Colonic mucosa (tissue), 4 donors: ENCODE measurements at regions of chrX and their contacts with region 1.

Region 1: GRCh38 chrX:51641421-51642021 is 22.8 kb upstream of the CENPVL3 start:
- DNase-seq: no peak
- H3K4me3 ChIP-seq: no peak overlapping the region
- H3K27ac ChIP-seq: no peak overlapping the region
- H3K4me1 ChIP-seq: no peaks in the 10 kb centered on the region
- H3K27me3 ChIP-seq: no peaks in the 10 kb centered on the region
- CTCF ChIP-seq: no peak

Region 2: DNA sequence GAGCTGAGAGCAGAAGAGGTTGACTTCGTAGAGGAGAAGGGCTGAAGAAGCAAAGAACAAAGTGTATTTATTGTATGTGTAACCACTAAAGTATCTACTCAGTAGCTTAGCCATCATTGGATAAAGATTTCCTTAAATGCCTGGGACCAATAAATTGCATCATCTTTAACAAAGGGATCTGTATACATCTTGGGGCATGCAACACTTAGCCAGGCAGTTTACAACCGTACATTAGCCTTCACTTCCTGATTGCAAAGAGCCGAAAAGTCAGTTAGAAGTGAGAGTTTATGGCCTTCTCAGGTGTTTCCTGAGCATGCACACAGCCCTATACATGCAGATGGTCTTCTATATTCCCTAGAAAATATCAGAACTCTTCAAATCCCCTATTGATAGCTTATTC is 183.9 kb after region 1 on chrX:
- intact Hi-C with region 1: no loop called
- DNase-seq: peak; percentile 19
- H3K4me3 ChIP-seq: no peak overlapping the region
- H3K27ac ChIP-seq: no peak overlapping the region
- H3K4me1 ChIP-seq: no peaks in the 10 kb centered on the region
- H3K27me3 ChIP-seq: no peaks in the 10 kb centered on the region
- CTCF ChIP-seq: no peak

Region 3: DNA sequence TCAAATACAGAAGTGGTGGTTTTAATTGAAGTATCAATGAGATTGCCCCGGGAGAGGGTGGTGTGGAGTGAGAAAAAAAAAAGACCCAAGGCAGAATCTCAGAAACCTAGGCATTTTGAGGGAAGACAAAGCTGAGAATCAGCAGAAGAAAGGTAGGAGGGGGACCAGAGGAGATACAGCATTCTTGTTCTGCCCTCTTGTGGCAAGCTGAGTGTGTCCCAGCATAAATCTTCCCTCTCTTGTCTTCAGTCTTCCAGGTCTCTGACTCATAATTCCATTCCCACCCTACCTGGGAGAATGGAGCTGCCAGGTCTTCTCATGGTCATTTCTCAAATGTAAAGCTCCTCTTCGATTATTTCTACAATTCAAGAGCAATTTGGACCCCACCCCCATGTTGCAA is 219.2 kb after region 1 on chrX:
- intact Hi-C with region 1: loop called (anchors 5 kb)
- DNase-seq: peak; percentile 22
- H3K4me3 ChIP-seq: no peak overlapping the region
- H3K27ac ChIP-seq: no peak overlapping the region
- H3K4me1 ChIP-seq: no peaks in the 10 kb centered on the region
- H3K27me3 ChIP-seq: no peaks in the 10 kb centered on the region
- CTCF ChIP-seq: no peak

Region 4: DNA sequence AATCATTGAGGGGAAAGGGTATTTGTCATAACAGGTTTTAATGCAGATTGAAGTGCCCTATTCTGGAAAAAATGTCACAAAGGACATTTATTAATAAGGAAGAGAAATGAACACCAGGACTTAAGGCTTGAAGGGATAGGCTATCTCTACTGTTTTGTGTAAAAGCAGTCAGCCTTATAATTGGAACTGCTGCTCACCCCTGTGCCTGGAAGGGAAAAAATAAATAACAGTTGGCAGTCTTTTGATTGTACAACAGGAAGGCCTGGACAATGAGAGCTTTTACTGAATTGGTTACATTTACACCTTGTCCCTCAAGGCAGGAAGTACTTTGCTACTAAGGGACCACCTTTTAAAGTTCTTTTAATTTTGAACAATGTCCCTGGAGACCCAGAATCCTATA is 525.3 kb after region 1 on chrX:
- intact Hi-C with region 1: no loop called
- DNase-seq: no peak
- H3K4me3 ChIP-seq: no peak overlapping the region
- H3K27ac ChIP-seq: no peak overlapping the region
- H3K4me1 ChIP-seq: no peaks in the 10 kb centered on the region
- H3K27me3 ChIP-seq: no peaks in the 10 kb centered on the region
- CTCF ChIP-seq: no peak